Heart left ventricle (tissue), 16 donors: ENCODE measurements at regions of chr11 and their contacts with region 1.

Region 1: DNA sequence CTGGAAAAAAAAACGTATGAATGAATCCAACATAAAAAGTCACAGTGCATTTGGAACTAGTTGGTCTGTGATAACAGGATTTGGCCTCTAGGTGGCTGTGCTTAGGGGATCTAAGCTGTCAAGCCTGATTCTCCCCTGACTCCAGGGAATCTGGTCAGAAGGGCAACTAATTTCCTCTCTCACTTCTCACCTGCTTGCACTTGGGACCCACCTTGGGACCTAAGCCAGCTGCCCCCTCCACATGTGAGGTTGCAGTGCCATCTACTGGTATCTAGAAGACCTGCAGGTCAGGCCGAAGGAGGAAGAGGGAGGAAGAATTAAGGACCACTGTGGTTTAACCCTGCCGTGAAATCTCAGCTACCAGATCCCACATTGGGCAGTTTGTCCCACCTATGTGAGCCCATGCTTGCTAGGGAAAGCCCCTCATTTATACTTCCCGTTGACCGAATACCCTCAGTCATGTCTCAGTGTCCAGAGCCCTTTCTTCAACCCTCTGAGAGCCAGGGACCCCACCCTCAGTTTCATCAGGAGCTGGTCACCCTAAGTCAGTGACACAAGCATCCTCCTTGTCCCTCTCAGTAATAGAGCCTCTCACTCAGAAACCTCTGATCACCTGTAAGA is 33.2 kb upstream of the CAVIN3 start:
- DNase-seq: peak in 4 of 5 donors; percentile 35 to 44 (median 41)
- ATAC-seq: peak in 3 of 4 donors; percentile 42 to 64 (median 58)
- H3K4me3 ChIP-seq: no peak overlapping the region
- H3K27ac ChIP-seq: no peak overlapping the region
- H3K4me1 ChIP-seq: peaks cover 0 to 9% (median 0%) of the 10 kb centered on the region in 12 donors
- H3K27me3 ChIP-seq: no peaks in the 10 kb centered on the region
- CTCF ChIP-seq: peak; percentile 90 to 99 (median 96)
- POLR2A ChIP-seq: no peak

Region 2: DNA sequence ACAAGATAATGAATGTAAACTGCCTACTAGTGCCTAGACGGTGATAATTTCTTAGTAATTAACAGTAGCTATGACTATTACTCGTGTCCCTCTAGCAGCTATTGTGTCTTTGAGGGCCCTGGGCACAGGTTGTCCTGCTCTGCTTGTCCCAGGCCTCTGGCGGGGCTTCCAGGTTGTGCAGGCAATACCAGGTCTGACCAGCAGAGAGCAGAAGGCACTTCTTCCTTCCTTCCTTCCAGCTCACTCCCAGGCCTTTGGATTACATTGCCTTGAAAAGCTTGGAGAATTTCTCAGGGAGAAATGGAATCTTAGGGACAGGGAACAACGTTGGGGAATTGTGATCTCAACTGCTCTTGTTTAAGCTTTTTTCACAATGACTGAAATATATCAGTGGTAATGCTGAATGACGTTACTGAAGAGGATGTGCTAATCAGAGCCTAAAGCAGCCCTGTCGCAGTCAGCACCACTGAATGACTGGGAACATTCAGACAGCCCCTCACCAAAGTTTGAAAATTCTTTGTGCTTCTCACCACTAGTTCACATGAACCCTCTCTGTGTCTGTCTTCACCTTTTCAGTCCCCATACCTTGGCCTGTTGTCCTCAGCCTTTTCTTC is 102.2 kb before region 1 on chr11:
- intact Hi-C with region 1: loop called in 8 of 10 experiments (anchors 1 to 10 kb)
- DNase-seq: peak; percentile 49 to 72 (median 59)
- ATAC-seq: peak; percentile 83 to 94 (median 88)
- H3K4me3 ChIP-seq: no peak overlapping the region
- H3K27ac ChIP-seq: peak overlapping the region in 4 of 12 donors; percentile 9 to 70 (median 30)
- H3K4me1 ChIP-seq: peaks cover 0 to 23% (median 2%) of the 10 kb centered on the region in 12 donors
- H3K27me3 ChIP-seq: peaks cover 0 to 14% (median 0%) of the 10 kb centered on the region in 9 donors
- CTCF ChIP-seq: peak; percentile 63 to 87 (median 80)
- POLR2A ChIP-seq: no peak

Region 3: DNA sequence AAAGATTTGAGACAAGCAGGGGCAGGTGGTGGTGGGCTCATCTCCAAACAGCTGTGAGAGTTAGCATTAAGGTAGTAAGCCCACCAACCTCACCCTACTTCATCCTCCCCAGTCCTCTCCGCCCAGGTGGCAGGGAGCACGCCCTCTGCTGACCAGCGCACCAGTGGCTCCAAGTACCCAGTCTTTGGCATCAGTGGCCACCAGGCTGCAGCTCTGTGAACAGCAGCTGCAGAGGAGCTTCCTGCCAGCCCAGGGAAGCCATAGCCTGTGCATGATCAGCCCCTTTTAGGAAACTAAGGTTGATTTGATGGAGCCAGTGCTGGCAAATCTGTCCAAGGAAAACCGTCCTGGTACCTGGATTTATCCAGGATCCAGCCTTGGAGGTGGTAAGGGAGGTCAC is 54.9 kb before region 1 on chr11:
- intact Hi-C with region 1: loop called (anchors 1 to 10 kb)
- DNase-seq: peak in 4 of 5 donors; percentile 35 to 69 (median 48)
- ATAC-seq: peak; percentile 75 to 93 (median 90)
- H3K4me3 ChIP-seq: no peak overlapping the region
- H3K27ac ChIP-seq: no peak overlapping the region
- H3K4me1 ChIP-seq: no peaks in the 10 kb centered on the region
- H3K27me3 ChIP-seq: no peaks in the 10 kb centered on the region
- CTCF ChIP-seq: peak; percentile 32 to 73 (median 56)
- POLR2A ChIP-seq: no peak

Region 4: GRCh38 chr11:6307876-6308275 is 45.6 kb before region 1 on chr11:
- intact Hi-C with region 1: loop called in 3 of 10 experiments (anchors 5 to 10 kb)
- DNase-seq: no peak
- ATAC-seq: no peak
- H3K4me3 ChIP-seq: no peak overlapping the region
- H3K27ac ChIP-seq: no peak overlapping the region
- H3K4me1 ChIP-seq: no peaks in the 10 kb centered on the region
- H3K27me3 ChIP-seq: peaks cover 0 to 7% (median 0%) of the 10 kb centered on the region in 9 donors
- CTCF ChIP-seq: no peak
- POLR2A ChIP-seq: no peak

Region 5: DNA sequence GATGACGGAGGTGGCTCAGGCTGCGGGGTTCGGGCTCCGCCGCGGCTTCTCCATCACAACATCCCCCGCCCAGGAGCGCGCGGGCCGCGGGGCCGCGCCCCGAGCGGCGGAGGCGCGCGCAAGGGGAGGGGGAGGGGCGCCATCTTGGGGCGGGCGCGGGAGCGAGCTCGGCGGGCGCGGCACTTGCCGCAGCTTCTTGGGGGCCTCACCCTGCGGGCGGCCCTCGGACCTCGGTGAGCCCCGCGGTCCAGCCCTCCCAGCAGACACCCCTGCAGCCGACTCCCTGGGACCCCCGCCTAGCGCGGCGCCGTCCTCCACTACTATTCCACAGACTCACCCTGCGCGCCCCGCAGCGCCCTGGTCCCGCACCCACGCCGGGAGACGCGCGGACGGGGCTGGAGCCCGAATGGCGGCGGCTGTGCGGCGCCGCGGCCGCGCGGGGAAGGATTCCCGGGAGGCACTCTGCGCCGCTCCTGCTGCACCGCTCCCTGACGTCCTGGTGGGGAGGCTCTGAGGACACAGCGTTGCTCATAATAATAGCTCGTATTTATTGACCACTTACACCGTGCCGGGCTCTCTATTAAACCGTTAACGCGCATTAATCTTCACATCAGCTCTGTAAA is 65.6 kb after region 1 on chr11 and contains the start of gene APBB1:
- intact Hi-C with region 1: no loop called
- DNase-seq: peak; percentile 65 to 85 (median 78)
- ATAC-seq: peak; percentile 68 to 97 (median 90)
- H3K4me3 ChIP-seq: peak within 1 kb of the TSS; percentile 74 to 100 (median 94)
- H3K27ac ChIP-seq: peak within 1 kb of the TSS; percentile 89 to 99 (median 94)
- H3K4me1 ChIP-seq: peaks cover 0 to 40% (median 14%) of the 10 kb centered on the region in 12 donors
- H3K27me3 ChIP-seq: peaks cover 0 to 9% (median 0%) of the 10 kb centered on the region in 9 donors
- CTCF ChIP-seq: peak in 5 of 12 donors; percentile 8 to 20 (median 16)
- POLR2A ChIP-seq: peak; percentile 1 to 75
- total RNA-seq, gene APBB1: 50.3 to 101 (median 83.5) TPM